BJ (cell line): ENCODE measurements at regions of chr9 and their contacts with region 1.

Region 1: GRCh38 chr9:5857928-5858327 is 25.0 kb upstream of the ERMP1 start:
- DNase-seq: no peak
- H3K4me3 ChIP-seq: no peak overlapping the region
- H3K27me3 ChIP-seq: peaks cover 1% of the 10 kb centered on the region
- CTCF ChIP-seq: no peak

Region 2: GRCh38 chr9:5870691-5871090 is 12.8 kb after region 1 on chr9:
- CTCF ChIA-PET with region 1: interaction called, 10 read pairs
- POLR2A ChIA-PET with region 1: interaction called, 3 read pairs
- DNase-seq: no peak
- H3K4me3 ChIP-seq: no peak overlapping the region
- H3K27me3 ChIP-seq: no peaks in the 10 kb centered on the region
- CTCF ChIP-seq: no peak

Region 3: DNA sequence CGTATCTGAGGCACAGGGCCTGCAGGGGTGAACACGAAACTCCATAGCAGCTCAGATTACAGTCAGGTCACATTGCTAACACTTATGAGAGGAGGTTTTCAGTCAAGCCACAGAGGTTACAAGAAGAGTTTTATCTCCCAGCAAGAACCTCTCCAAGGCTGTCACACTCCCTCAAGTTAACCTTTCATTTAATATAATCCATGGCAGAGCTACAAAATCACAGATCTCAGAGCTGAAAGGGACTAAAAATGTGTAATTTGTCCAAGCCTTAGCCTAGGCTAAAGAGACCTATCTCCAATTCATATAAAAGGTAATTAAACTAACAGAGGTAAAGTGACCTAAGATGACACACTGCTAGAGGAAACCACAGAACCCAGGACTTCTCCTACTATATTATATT is 90.0 kb after region 1 on chr9:
- CTCF ChIA-PET with region 1: interaction called, 3 read pairs
- POLR2A ChIA-PET with region 1: interaction called, 13 read pairs
- DNase-seq: no peak
- H3K4me3 ChIP-seq: no peak overlapping the region
- H3K27me3 ChIP-seq: no peaks in the 10 kb centered on the region
- CTCF ChIP-seq: no peak